ENCODE measurements at regions of chr16 and their contacts with region 1.

Region 1: DNA sequence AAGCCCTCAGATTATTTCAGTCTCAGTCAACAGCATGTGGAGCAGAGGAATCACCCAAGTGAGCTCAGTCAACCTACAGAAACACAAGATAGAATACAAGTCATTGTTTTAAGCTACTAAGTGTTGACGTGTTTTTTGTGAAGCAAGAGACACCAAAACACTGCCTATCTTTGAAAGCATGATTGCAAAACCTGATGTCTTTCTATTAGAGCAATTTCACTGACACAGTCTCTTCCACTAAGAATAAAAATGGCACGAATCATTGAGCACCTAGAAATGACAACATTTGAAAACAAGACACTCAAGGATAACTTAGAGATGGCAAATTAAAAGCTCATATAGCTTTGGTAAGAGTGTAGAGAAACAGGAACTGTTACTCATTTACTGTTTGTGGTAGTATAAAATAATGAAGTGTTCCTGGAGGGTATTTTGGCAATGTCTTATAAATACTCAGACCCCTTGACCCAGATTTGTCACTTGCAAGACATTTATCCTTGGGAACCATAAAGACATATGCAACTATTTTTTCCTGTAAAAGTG is 407.1 kb upstream of the XYLT1 start:
- DNase-seq: no peak
- ATAC-seq: no peak
- H3K4me3 ChIP-seq: no peak overlapping the region
- H3K27ac ChIP-seq: no peak overlapping the region
- H3K4me1 ChIP-seq: no peaks in the 10 kb centered on the region
- H3K27me3 ChIP-seq: no peaks in the 10 kb centered on the region
- CTCF ChIP-seq: no peak
- POLR2A ChIP-seq: no peak
- RAD21 ChIP-seq: no peak

Region 2: GRCh38 chr16:17843908-17844307 is 34.0 kb before region 1 on chr16:
- CTCF ChIA-PET with region 1: interaction called, 3 read pairs
- POLR2A ChIA-PET with region 1: no interaction called
- dilution Hi-C with region 1: no loop called
- in situ Hi-C with region 1: no loop called
- intact Hi-C with region 1: loop called (anchors 1 kb)
- DNase-seq: no peak
- ATAC-seq: no peak
- H3K4me3 ChIP-seq: no peak overlapping the region
- H3K27ac ChIP-seq: no peak overlapping the region
- H3K4me1 ChIP-seq: no peaks in the 10 kb centered on the region
- H3K27me3 ChIP-seq: no peaks in the 10 kb centered on the region; the same call in 1 of the 2 replicates
- CTCF ChIP-seq: no peak
- POLR2A ChIP-seq: no peak
- RAD21 ChIP-seq: no peak

Measured in IMR-90 (cell line).